Activated CD8-positive, alpha-beta T cell treated with anti-CD3 and anti-CD28 coated beads for 36 hours (primary cell): ENCODE measurements at regions of chr12 and their contacts with region 1.

Region 1: GRCh38 chr12:121793838-121794533 is 498 bp upstream of the RHOF start:
- DNase-seq: peak; percentile 95
- ATAC-seq: peak; percentile 60
- H3K4me3 Mint-ChIP-seq: peak overlapping the region; percentile 89
- H3K27ac Mint-ChIP-seq: peak overlapping the region; percentile 91
- H3K4me1 Mint-ChIP-seq: peaks cover 54% of the 10 kb centered on the region
- H3K27me3 Mint-ChIP-seq: no peaks in the 10 kb centered on the region
- CTCF ChIP-seq: peak; percentile 99

Region 2: DNA sequence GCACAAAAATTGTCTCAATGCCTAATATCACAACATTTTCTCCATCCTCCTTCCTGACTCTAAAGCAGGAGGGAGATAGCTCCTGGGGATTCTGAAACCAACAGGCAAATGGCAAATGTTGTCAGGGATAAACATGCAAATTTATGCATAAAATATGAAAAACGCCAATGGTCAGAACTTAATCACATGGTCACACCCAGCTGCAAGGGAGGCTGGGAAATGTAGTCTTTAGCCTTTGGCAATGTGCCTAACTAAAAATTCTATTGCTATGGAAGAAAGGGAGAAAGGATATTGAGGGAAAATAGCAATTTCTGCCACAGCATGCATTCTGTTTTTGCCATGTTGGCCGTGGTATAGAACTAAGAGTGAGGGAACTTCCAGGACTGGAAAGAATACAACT is 743.3 kb before region 1 on chr12:
- CTCF ChIA-PET with region 1: no interaction called
- POLR2A ChIA-PET with region 1: no interaction called
- intact Hi-C with region 1: no loop called
- DNase-seq: no peak
- ATAC-seq: no peak
- H3K4me3 Mint-ChIP-seq: no peak overlapping the region
- H3K27ac Mint-ChIP-seq: no peak overlapping the region
- H3K4me1 Mint-ChIP-seq: no peaks in the 10 kb centered on the region
- H3K27me3 Mint-ChIP-seq: no peaks in the 10 kb centered on the region
- CTCF ChIP-seq: no peak

Region 3: GRCh38 chr12:121626087-121626852 is 167.7 kb before region 1 on chr12 and contains the start of gene ORAI1:
- CTCF ChIA-PET with region 1: interaction called, 13 read pairs
- POLR2A ChIA-PET with region 1: interaction called, 5 read pairs
- intact Hi-C with region 1: no loop called
- DNase-seq: peak; percentile 98
- ATAC-seq: peak; percentile 61
- H3K4me3 Mint-ChIP-seq: peak within 1 kb of the TSS; percentile 94
- H3K27ac Mint-ChIP-seq: peak within 1 kb of the TSS; percentile 97
- H3K4me1 Mint-ChIP-seq: peaks cover 33% of the 10 kb centered on the region
- H3K27me3 Mint-ChIP-seq: no peaks in the 10 kb centered on the region
- CTCF ChIP-seq: no peak
- total RNA-seq, gene ORAI1: 37.0 to 38.1 TPM

Region 4: GRCh38 chr12:121697098-121697698 is 96.8 kb before region 1 on chr12:
- CTCF ChIA-PET with region 1: interaction called, 102 read pairs
- POLR2A ChIA-PET with region 1: interaction called, 5 read pairs
- intact Hi-C with region 1: no loop called
- DNase-seq: peak; percentile 28
- ATAC-seq: peak; percentile 37
- H3K4me3 Mint-ChIP-seq: no peak overlapping the region
- H3K27ac Mint-ChIP-seq: no peak overlapping the region
- H3K4me1 Mint-ChIP-seq: no peaks in the 10 kb centered on the region
- H3K27me3 Mint-ChIP-seq: no peaks in the 10 kb centered on the region
- CTCF ChIP-seq: peak; percentile 75

Region 5: GRCh38 chr12:121773011-121773777 is 20.8 kb before region 1 on chr12:
- CTCF ChIA-PET with region 1: interaction called, 420 read pairs
- POLR2A ChIA-PET with region 1: interaction called, 683 read pairs
- intact Hi-C with region 1: no loop called
- DNase-seq: peak; percentile 86
- ATAC-seq: peak; percentile 95
- H3K4me3 Mint-ChIP-seq: no peak overlapping the region
- H3K27ac Mint-ChIP-seq: peak overlapping the region; percentile 69
- H3K4me1 Mint-ChIP-seq: peaks cover 12% of the 10 kb centered on the region
- H3K27me3 Mint-ChIP-seq: no peaks in the 10 kb centered on the region
- CTCF ChIP-seq: peak; percentile 85

Region 6: DNA sequence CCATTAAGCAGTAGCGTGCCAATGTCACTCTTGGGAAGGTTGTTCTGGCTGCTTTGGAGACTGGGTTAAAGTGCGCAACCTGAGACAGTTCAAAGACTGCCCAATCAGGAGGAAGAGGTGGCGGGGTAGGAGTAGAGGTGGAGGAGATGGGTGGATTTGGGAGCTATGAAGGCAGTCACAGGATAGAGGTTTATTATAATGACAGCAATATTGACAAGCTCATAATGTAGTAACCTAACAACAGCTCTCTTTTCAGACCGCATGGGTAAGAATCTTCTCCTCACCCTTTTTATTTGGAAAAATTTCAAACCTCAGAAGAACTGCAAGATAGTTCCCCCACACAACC is 89.3 kb after region 1 on chr12:
- CTCF ChIA-PET with region 1: interaction called, 86 read pairs
- POLR2A ChIA-PET with region 1: interaction called, 13 read pairs
- intact Hi-C with region 1: loop called (anchors 2 kb)
- DNase-seq: no peak
- ATAC-seq: no peak
- H3K4me3 Mint-ChIP-seq: no peak overlapping the region
- H3K27ac Mint-ChIP-seq: no peak overlapping the region
- H3K4me1 Mint-ChIP-seq: peaks cover 8% of the 10 kb centered on the region
- H3K27me3 Mint-ChIP-seq: no peaks in the 10 kb centered on the region
- CTCF ChIP-seq: no peak

Region 7: DNA sequence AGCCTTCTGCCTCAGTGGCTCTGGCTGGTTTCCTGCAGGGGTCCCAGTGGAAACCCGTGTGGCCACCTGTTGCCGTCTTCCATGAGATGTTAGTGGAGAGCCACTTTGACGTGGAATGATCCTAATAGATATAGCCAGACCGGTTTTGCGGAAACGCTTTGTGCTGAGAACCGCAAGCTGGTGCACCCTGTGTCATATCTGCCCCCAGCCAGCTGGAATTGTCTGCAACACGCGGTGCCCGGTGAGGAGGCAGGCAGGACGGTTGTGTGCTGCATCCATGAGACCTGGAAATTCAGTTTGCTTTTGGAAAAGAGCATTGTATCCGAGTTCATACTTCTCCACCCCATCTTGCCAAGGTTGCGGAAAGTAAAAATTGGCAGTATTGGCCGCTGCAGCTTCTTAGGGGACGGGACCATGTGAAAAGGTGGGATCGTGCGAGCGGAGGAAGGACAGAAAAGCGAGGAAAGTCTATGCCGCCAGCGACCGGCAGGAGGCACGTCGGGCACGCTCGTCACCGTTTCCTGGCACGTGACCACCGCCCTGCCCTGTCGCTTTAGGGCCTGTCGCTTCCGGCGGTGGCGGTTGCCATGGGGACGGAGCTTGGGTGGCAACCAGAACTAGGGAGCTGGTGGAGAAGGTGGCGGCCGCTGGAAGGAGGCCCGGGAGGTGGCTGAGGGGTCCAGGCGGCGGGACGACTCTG is 124.1 kb after region 1 on chr12 and contains the start of gene CFAP251:
- CTCF ChIA-PET with region 1: interaction called, 12 read pairs
- POLR2A ChIA-PET with region 1: no interaction called
- intact Hi-C with region 1: no loop called
- DNase-seq: peak; percentile 99
- ATAC-seq: peak; percentile 98
- H3K4me3 Mint-ChIP-seq: peak within 1 kb of the TSS; percentile 76
- H3K27ac Mint-ChIP-seq: peak within 1 kb of the TSS; percentile 89
- H3K4me1 Mint-ChIP-seq: peaks cover 12% of the 10 kb centered on the region
- H3K27me3 Mint-ChIP-seq: no peaks in the 10 kb centered on the region
- CTCF ChIP-seq: peak; percentile 66
- total RNA-seq, gene CFAP251: 2.0 to 2.9 TPM